ENCODE measurements at regions of chr1 and their contacts with region 1.

Region 1: DNA sequence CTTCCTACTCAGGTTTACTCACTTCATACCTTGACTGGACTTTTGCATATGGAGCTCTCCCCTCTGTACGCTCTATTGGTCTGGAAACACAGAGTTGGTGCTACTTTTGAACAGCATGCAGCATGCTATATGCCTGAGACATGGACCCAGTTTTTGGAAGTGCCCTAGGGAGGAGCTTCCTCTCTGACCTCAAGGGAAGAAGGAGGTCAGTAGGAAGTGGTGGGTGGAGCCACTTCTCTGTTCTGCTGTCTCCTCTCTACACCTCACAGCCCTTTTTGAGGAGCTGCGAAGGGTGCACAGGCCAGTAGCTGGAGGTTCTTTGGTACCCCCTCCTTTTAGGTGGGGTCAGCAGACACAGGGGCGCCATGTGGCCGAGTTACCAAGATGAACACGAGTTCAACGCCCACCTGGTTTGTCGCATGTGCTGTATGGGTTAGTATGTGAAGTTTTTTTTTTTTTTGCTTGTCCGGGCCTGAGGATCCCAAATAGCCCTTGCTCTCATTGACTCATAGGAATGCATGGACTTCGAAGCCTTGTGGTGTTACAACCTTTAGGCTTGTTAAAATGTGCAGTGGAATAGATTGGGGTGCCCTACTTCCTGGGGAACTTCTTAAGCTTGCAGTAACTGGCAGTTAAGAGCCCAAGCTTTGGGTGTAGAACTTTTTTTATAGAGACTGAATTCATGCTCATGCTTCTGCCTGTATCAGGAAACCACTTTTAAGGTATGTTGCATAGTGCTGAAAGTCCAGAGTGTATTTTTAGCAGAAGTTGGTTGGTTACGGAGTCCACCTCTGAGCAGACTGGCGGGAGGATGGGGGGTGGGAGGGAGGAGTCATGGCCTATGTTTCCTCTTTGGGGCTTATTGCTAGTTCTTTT is 10.7 kb downstream of the MACF1 start:
- DNase-seq: peak; percentile 78
- H3K4me3 ChIP-seq: peak overlapping the region; percentile 75
- H3K27ac ChIP-seq: peak overlapping the region; percentile 88
- H3K4me1 ChIP-seq: peaks cover 55% of the 10 kb centered on the region
- CTCF ChIP-seq: no peak

Region 2: DNA sequence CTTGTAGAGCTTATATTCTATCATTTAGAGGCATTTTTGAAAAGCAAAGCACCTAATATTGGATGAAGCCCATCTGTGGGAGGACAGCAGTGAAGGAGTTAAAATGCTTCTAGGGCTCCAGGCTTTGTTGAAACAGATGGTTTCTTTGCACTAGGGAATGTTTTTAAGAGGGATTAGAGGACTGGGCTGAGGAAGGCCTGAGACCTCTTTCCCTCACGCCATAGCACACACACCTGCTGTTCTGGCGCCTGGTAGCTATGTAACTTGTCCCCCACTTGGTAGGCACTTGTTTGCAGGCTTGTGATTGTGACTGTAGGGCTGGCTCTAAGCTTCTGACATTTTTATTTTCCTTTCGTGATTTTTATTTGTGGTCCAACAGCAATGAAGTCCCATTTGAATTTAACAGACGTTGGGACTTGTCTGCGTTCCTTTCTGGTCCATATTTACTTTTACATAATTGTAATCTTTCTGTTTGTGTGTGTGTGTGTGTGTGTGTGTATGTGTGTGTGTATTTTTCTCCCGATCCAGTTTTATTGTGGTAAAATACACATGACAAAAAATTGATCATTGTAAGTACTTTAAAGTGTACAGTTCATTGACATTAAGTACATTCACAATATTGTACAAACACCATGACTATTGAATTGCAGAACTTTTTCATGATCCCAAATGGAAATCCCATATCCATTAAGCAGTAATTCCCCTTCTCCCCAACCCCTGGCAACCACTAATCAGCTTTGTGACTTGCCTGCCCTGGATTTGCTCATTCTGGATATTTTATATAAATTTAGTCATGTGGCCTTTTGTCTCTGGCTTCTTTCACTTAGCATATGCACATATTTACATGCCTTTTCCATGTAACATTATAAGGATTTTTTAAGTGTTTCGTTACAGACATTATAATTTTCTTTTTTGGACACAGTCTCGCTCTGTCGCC is 44.2 kb before region 1 on chr1:
- CTCF ChIA-PET with region 1: no interaction called
- POLR2A ChIA-PET with region 1: no interaction called
- intact Hi-C with region 1: no loop called
- DNase-seq: no peak
- H3K4me3 ChIP-seq: no peak overlapping the region
- H3K27ac ChIP-seq: no peak overlapping the region
- H3K4me1 ChIP-seq: no peaks in the 10 kb centered on the region
- CTCF ChIP-seq: no peak

Region 3: GRCh38 chr1:39204441-39205081 is 10.7 kb before region 1 on chr1 and contains the start of gene MACF1:
- CTCF ChIA-PET with region 1: interaction called, 18 read pairs
- POLR2A ChIA-PET with region 1: interaction called, 90 read pairs
- intact Hi-C with region 1: loop called (anchors 1 kb)
- DNase-seq: peak; percentile 61
- H3K4me3 ChIP-seq: peak within 1 kb of the TSS; percentile 70
- H3K27ac ChIP-seq: peak within 1 kb of the TSS; percentile 70
- H3K4me1 ChIP-seq: peaks cover 55% of the 10 kb centered on the region
- CTCF ChIP-seq: peak; percentile 60
- total RNA-seq, gene MACF1: 211 and 235 TPM in 2 replicates

Region 4: DNA sequence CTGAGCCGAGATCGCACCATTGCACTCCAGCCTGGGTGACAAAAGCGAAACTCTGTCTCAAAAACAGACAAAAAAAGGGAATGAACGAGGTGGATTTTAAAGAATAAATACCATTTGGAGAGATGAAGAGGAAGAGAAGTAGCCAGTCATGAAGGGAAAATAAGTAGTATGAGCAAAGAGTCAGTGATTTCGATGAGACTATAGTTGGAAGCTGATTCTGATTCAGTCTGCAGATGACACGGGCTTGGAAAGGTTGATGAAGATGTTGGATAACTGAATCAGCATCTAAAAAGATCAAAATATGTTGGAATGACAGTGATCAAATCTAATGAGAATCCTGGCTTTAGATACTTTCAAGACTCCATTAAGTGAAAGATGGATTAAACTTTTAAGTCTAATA is 13.0 kb after region 1 on chr1:
- CTCF ChIA-PET with region 1: no interaction called
- POLR2A ChIA-PET with region 1: interaction called, 20 read pairs
- intact Hi-C with region 1: no loop called
- DNase-seq: no peak
- H3K4me3 ChIP-seq: no peak overlapping the region
- H3K27ac ChIP-seq: no peak overlapping the region
- H3K4me1 ChIP-seq: peaks cover 30% of the 10 kb centered on the region
- CTCF ChIP-seq: no peak